PC-3 (cell line): ENCODE measurements at regions of chr5 and their contacts with region 1.

Region 1: DNA sequence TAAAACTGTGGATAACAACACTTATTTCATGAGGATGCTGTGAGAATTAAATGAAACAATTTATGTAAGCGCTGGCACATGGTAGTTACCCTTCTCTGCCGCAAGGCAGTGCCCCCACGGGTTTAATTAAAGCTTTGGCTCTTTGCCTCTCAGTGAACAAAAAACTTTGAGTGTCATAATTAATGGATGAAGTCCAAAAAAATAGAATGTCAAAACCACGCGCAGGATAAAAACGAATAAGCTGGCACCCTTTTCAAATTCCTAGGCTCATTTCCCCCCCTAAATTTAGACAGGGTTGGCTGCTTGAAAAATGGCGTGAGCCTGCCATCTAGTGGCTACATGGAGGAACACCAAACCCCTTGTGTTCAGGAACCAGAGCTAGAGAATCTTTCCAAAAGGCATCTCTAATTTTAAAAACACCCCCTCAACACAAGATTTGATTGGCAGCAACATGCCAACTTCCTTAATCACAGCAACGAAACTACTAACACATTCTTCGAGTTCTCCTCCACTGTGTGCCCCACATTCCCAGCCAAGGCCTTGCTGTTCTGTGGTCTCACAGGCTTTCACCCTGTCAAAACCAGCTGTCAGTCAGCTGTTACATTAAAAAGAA is 29.0 kb upstream of the CCNG1 start:
- DNase-seq: peak; percentile 71
- ATAC-seq: peak; percentile 76
- H3K4me3 ChIP-seq: peak overlapping the region; percentile 39; the same call in 1 of the 2 replicates
- H3K27ac ChIP-seq: no peak overlapping the region
- H3K4me1 ChIP-seq: peaks cover 14% of the 10 kb centered on the region
- H3K27me3 ChIP-seq: no peaks in the 10 kb centered on the region
- CTCF ChIP-seq: peak; percentile 98

Region 2: GRCh38 chr5:161851691-161852299 is 1556.6 kb before region 1 on chr5:
- CTCF ChIA-PET with region 1: no interaction called
- POLR2A ChIA-PET with region 1: no interaction called
- intact Hi-C with region 1: loop called (anchors 1 kb)
- DNase-seq: peak; percentile 43
- ATAC-seq: no peak
- H3K4me3 ChIP-seq: no peak overlapping the region
- H3K27ac ChIP-seq: no peak overlapping the region
- H3K4me1 ChIP-seq: peaks cover under 1% of the 10 kb centered on the region; the same call in 1 of the 2 replicates
- H3K27me3 ChIP-seq: peaks cover 30% of the 10 kb centered on the region; the same call in 1 of the 2 replicates
- CTCF ChIP-seq: peak; percentile 79

Region 3: DNA sequence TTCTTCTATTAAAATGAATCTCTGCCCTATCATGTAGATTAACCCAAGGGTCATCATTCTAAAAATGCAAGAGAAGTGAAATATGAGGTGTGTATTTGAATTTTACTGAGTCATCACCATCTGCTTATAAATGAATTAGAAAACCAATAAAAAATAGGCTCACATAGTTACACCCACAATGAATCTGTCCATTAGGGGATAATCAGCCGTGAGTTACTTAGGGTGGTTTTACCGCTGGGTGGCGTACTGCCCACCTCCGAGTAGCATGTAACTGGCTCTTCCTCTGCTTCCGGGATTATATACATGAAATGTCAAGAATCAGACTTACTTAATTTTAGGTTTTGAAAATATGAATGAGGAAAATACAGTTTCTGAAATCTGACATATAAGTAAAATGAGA is 304.0 kb before region 1 on chr5:
- CTCF ChIA-PET with region 1: no interaction called
- POLR2A ChIA-PET with region 1: no interaction called
- intact Hi-C with region 1: loop called (anchors 10 kb)
- DNase-seq: peak; percentile 74
- ATAC-seq: peak; percentile 29
- H3K4me3 ChIP-seq: no peak overlapping the region
- H3K27ac ChIP-seq: peak overlapping the region; percentile 44
- H3K4me1 ChIP-seq: peaks cover 32% of the 10 kb centered on the region
- H3K27me3 ChIP-seq: 0 out of 2 replicates have a peak, but pooled peaks cover 7% of the 10 kb centered on the region
- CTCF ChIP-seq: peak; percentile 72

Region 4: DNA sequence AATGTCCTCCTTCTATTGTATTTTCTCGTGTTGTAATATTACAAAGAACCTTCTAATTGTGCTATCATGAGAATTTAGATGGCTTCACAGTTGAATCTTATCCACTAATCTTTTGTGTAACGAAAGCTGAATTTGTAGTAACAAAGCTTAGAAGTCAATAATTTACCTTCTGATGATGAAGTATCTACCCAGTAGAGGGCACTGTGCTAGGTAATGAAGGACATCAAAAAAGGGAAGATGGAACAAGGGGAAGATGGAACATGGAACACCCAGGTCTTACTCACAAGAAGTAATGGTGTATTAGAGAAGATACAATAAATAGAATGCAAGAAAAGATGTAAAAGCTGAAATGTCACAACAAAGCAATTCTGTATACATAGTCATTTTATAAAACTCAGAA is 102.0 kb before region 1 on chr5:
- CTCF ChIA-PET with region 1: interaction called, 14 read pairs
- POLR2A ChIA-PET with region 1: no interaction called
- intact Hi-C with region 1: loop called (anchors 2 kb)
- DNase-seq: peak; percentile 57
- ATAC-seq: peak; percentile 63
- H3K4me3 ChIP-seq: no peak overlapping the region
- H3K27ac ChIP-seq: no peak overlapping the region
- H3K4me1 ChIP-seq: no peaks in the 10 kb centered on the region
- H3K27me3 ChIP-seq: peaks cover 19% of the 10 kb centered on the region; the same call in 1 of the 2 replicates
- CTCF ChIP-seq: peak; percentile 75

Region 5: GRCh38 chr5:163379298-163380155 is 28.9 kb before region 1 on chr5:
- CTCF ChIA-PET with region 1: no interaction called
- POLR2A ChIA-PET with region 1: no interaction called
- intact Hi-C with region 1: loop called (anchors 1 kb)
- DNase-seq: peak; percentile 94
- ATAC-seq: peak; percentile 91
- H3K4me3 ChIP-seq: peak overlapping the region; percentile 47; the same call in 1 of the 2 replicates
- H3K27ac ChIP-seq: peak overlapping the region; percentile 97
- H3K4me1 ChIP-seq: peaks cover 29% of the 10 kb centered on the region
- H3K27me3 ChIP-seq: no peaks in the 10 kb centered on the region
- CTCF ChIP-seq: no peak

Region 6: GRCh38 chr5:163437309-163438182 is 29.1 kb after region 1 on chr5 and contains the start of gene CCNG1:
- CTCF ChIA-PET with region 1: no interaction called
- POLR2A ChIA-PET with region 1: no interaction called
- intact Hi-C with region 1: no loop called
- DNase-seq: peak; percentile 97
- ATAC-seq: peak; percentile 92
- H3K4me3 ChIP-seq: peak within 1 kb of the TSS; percentile 98
- H3K27ac ChIP-seq: 0 out of 2 replicates have a peak within 1 kb of the TSS, but pooled peaks have one; percentile 12
- H3K4me1 ChIP-seq: peaks cover 29% of the 10 kb centered on the region
- H3K27me3 ChIP-seq: no peaks in the 10 kb centered on the region
- CTCF ChIP-seq: no peak
- total RNA-seq, gene CCNG1: 60.9 and 70.0 TPM in 2 replicates